Motor neuron (in vitro differentiated cells): ENCODE measurements at regions of chr11 and their contacts with region 1.

Region 1: DNA sequence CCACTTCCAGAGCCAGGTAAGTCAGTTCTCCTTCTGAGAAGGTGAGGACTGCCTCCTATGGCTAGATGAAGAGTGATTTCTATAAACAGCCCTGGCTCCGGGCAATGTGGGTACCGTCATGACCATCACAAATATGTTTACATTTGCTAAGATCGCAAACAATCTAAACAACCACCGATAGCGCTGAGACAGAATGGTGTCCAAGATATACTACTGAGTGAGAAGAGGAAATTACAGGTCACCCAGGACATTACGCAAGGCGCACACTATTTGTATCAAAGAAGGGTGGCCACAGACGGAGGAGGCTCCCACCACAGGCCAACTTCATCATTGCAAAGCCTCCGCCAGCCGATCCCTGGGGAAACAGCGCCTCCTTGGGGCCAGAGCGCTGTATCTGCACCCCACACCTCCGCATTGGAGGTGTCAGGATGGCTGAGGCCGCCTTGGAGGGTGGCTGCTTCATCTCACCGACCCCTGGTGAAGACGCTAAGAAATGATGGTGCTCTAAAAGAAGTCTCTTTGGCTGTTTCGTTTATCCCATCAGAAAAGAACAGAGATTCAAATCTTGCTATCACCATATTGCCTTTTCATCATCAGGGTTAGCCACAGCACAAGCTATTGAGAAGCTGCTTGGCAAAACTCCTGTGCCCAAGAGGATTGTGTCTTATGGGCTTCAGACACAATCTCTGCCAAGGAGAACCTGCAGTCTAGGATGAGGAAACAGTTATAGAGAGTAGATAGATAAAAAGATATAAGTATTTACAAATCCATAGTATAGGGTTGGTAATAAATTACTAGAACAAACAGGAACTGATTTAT is 12.3 kb upstream of the ASRGL1 start:
- ATAC-seq: peak in 2 of 8 experiments; percentile 88 to 94
- H3K4me3 ChIP-seq: no peak overlapping the region
- H3K27ac ChIP-seq: no peak overlapping the region
- H3K4me1 ChIP-seq: peaks cover 4 to 6% of the 10 kb centered on the region in 2 donors

Region 2: GRCh38 chr11:62150907-62151736 is 173.8 kb before region 1 on chr11:
- in situ Hi-C with region 1: loop called in 1 of 9 experiments (anchors 25 kb)
- ATAC-seq: no peak
- H3K4me3 ChIP-seq: no peak overlapping the region
- H3K27ac ChIP-seq: no peak overlapping the region
- H3K4me1 ChIP-seq: no peaks in the 10 kb centered on the region

Region 3: DNA sequence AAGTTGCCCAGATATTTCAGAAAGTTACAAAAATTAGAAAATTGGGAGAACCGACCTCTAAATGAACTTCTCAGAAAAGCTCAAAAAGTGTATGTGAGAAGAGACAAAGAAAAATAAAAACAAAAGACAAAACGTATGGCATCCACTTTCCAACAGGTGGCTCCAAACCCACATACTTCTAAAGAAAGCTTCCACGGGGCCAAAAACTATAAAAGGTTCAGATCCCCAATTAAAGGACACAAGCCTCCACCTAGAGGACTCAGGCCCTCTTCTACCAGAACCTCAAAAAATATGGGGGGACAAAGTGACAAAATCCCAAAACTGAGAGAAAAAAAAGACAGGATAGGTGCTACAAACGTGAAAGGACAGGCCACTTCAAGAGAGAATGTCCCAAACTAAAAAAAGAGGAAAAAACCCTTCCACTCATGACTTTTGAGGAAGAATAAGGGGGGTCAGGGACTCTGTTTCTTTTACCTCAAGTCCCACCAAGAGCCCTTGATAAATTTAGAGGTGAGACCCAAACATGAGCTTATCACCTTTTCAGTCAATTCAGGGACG is 107.7 kb before region 1 on chr11:
- in situ Hi-C with region 1: loop called in 2 of 9 experiments (anchors 25 kb)
- ATAC-seq: peak in 1 of 8 experiments; percentile 14
- H3K4me3 ChIP-seq: no peak overlapping the region
- H3K27ac ChIP-seq: no peak overlapping the region
- H3K4me1 ChIP-seq: no peaks in the 10 kb centered on the region